ENCODE measurements at regions of chr3 and their contacts with region 1.

Region 1: DNA sequence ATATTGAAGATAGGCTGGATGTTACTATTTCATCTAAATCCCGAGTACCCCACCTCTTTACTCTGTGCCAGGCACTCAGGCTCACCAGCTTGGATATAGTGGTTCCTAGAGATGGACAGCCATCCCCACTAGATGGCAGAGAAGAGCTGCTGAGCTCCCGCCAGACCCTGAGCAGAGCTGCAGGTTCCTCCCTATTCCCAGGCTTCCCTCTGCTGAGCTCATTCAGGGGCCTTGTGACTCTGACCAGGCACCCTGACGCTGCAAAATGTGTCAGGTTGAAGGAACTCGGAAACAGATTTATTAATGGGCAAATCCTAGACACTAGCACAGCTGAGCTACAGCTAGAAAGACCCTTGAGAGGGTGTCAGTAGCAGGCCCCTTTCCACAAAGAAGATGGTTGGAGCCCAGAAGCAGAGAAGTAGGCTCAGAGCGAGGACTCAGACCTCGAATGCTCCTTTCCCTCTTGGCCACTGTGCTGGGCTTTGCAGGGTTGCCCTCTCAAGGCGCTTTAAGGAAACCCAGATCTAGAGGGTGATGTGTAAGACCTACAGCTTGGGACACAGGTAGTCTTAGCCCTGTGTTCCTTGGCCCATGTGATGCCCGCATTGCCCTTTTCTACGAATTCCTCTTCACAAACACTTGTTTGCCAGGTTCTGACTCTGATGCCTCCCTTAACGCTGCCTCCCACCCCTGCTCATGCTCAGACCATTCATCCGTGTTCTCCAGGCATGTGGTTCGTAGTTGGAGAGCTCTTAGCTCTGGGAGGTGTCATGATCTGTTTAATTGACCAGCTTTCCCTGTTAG is 38.0 kb upstream of the RHO start:
- DNase-seq: peak; percentile 79
- H3K4me3 ChIP-seq: no peak overlapping the region
- H3K27ac ChIP-seq: no peak overlapping the region
- H3K4me1 ChIP-seq: peaks cover 31% of the 10 kb centered on the region
- H3K27me3 ChIP-seq: no peaks in the 10 kb centered on the region
- CTCF ChIP-seq: peak; percentile 83 to 94

Region 2: DNA sequence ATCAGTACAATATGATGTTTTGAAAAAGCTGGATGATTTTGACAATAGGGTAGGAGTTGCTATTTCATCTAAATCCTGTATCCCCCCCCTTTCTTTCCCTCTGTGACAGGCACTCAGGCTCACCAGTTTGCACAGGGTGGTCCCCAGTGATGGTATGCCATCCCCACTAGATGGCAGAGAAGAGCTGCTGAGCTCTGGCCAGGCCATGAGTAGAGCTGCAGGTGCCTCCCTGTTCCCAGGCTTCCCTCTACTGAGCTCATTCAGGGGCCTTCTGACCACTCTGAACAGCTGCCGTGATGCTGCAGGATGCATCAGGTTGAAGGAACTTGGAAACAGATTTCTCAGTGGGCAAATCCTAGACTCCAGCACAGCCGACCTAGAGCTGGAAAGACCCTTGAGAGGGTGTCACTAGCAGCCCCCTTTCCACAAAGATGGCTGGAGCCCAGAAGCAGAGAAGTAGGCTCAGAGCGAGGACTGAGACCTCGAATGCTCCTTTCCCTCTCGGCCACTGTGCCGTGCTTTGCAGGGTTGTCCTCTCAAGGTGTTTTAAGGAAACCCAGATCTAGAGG is 107.1 kb before region 1 on chr3:
- CTCF ChIA-PET with region 1: interaction called, 4 read pairs
- dilution Hi-C with region 1: no loop called
- in situ Hi-C with region 1: no loop called
- intact Hi-C with region 1: loop called (anchors 5 kb)
- DNase-seq: peak; percentile 49
- H3K4me3 ChIP-seq: no peak overlapping the region
- H3K27ac ChIP-seq: no peak overlapping the region
- H3K4me1 ChIP-seq: no peaks in the 10 kb centered on the region
- H3K27me3 ChIP-seq: no peaks in the 10 kb centered on the region
- CTCF ChIP-seq: peak; percentile 69 to 81

Region 3: DNA sequence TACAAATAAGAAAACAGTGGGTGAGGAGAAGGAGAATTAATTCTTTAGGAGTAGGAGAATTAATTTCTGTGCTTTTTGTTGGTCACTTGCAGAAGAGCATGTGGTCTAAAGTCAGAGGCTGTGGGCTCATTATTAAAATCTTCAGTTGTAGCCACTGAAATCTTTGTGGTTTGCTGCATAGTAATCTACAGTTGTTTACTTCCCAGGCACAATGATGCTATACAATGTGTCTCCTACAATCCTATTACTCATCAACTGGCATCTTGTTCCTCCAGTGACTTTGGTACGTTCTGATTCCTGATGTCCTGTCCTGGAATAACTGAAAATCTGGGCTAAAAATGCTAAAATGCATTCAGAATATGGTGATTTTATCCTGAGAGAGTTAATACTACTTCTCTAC is 29.4 kb before region 1 on chr3:
- CTCF ChIA-PET with region 1: no interaction called
- dilution Hi-C with region 1: no loop called
- in situ Hi-C with region 1: no loop called
- intact Hi-C with region 1: no loop called
- DNase-seq: peak; percentile 66
- H3K4me3 ChIP-seq: no peak overlapping the region
- H3K27ac ChIP-seq: peak overlapping the region; percentile 32
- H3K4me1 ChIP-seq: peaks cover 16% of the 10 kb centered on the region
- H3K27me3 ChIP-seq: no peaks in the 10 kb centered on the region
- CTCF ChIP-seq: no peak

Region 4: GRCh38 chr3:129552287-129553050 is 62.0 kb after region 1 on chr3:
- CTCF ChIA-PET with region 1: no interaction called
- dilution Hi-C with region 1: no loop called
- in situ Hi-C with region 1: no loop called
- intact Hi-C with region 1: loop called (anchors 1 kb)
- DNase-seq: no peak
- H3K4me3 ChIP-seq: no peak overlapping the region
- H3K27ac ChIP-seq: no peak overlapping the region
- H3K4me1 ChIP-seq: peaks cover 12% of the 10 kb centered on the region
- H3K27me3 ChIP-seq: no peaks in the 10 kb centered on the region
- CTCF ChIP-seq: no peak

Region 5: GRCh38 chr3:129611812-129612533 is 121.5 kb after region 1 on chr3:
- CTCF ChIA-PET with region 1: no interaction called
- dilution Hi-C with region 1: no loop called
- in situ Hi-C with region 1: no loop called
- intact Hi-C with region 1: loop called (anchors 1 kb)
- DNase-seq: no peak
- H3K4me3 ChIP-seq: no peak overlapping the region
- H3K27ac ChIP-seq: no peak overlapping the region
- H3K4me1 ChIP-seq: peaks cover 4% of the 10 kb centered on the region
- H3K27me3 ChIP-seq: no peaks in the 10 kb centered on the region
- CTCF ChIP-seq: no peak

Region 6: GRCh38 chr3:129650256-129650872 is 159.9 kb after region 1 on chr3:
- CTCF ChIA-PET with region 1: no interaction called
- dilution Hi-C with region 1: no loop called
- in situ Hi-C with region 1: no loop called
- intact Hi-C with region 1: loop called (anchors 2 kb)
- DNase-seq: peak; percentile 70
- H3K4me3 ChIP-seq: no peak overlapping the region
- H3K27ac ChIP-seq: no peak overlapping the region
- H3K4me1 ChIP-seq: peaks cover 26% of the 10 kb centered on the region
- H3K27me3 ChIP-seq: no peaks in the 10 kb centered on the region
- CTCF ChIP-seq: peak; percentile 66 to 76

Region 7: DNA sequence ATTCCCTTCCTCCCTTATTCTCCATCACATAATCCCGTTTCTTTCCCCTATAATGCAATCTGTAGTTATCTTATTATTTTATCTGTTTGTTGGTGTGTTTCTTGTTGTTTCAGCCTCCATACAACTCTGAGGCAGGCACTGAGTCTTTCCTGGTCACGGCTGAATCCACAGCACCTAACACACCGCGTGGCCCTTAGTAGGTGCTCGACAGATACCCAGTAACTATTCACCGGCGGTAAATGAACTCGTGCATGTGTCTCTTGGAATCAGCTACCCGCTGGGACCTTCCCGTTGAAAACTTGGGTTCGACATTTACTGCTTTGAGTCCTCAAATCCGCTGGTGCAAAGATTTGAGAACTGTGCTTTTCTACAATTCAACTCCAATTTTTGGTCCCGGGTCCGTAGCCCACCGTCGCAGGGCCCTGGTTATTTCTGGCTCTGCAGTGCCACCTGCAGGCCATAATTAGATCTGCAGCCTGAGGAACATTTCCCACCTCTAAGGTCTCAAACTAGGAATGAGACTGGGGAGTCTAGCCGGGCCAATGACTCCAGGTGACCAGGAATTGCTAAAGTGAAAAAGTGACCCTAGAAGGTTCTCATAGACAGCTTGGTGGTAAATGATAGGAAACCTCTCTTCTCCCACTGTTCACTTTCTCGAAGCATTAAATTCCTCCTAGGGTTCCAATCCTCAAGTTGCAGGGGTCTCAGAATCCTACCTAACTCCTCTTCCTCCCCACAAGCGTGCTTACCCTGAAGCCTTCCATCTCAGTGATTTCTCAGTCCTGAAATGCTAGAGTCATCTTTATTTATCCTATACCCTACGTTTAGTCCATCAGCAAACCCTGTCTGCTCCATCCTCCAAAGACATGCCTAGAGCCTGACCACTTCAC is 444.0 kb after region 1 on chr3:
- CTCF ChIA-PET with region 1: no interaction called
- dilution Hi-C with region 1: no loop called
- in situ Hi-C with region 1: loop called in 1 of 2 experiments (anchors 25 kb)
- intact Hi-C with region 1: loop called (anchors 1 kb)
- DNase-seq: no peak
- H3K4me3 ChIP-seq: no peak overlapping the region
- H3K27ac ChIP-seq: no peak overlapping the region
- H3K4me1 ChIP-seq: no peaks in the 10 kb centered on the region
- H3K27me3 ChIP-seq: no peaks in the 10 kb centered on the region
- CTCF ChIP-seq: peak; percentile 80 to 90

Region 8: GRCh38 chr3:130093741-130094391 is 603.4 kb after region 1 on chr3:
- CTCF ChIA-PET with region 1: no interaction called
- dilution Hi-C with region 1: no loop called
- in situ Hi-C with region 1: no loop called
- intact Hi-C with region 1: loop called (anchors 10 kb)
- DNase-seq: no peak
- H3K4me3 ChIP-seq: no peak overlapping the region
- H3K27ac ChIP-seq: no peak overlapping the region
- H3K4me1 ChIP-seq: peaks cover 10% of the 10 kb centered on the region
- H3K27me3 ChIP-seq: no peaks in the 10 kb centered on the region
- CTCF ChIP-seq: no peak

Measured in mammary epithelial cell (primary cell).